ENCODE measurements at regions of chr3 and their contacts with region 1.

Region 1: GRCh38 chr3:44418549-44418948 is 58.9 kb downstream of the ZNF445 start:
- DNase-seq: no peak
- ATAC-seq: no peak
- H3K4me3 ChIP-seq: no peak overlapping the region
- H3K27ac ChIP-seq: no peak overlapping the region
- H3K4me1 ChIP-seq: no peaks in the 10 kb centered on the region
- H3K27me3 ChIP-seq: peaks cover 2% of the 10 kb centered on the region
- CTCF ChIP-seq: 0 out of 2 replicates have a peak, but pooled peaks have one; percentile 5
- POLR2A ChIP-seq: no peak
- RAD21 ChIP-seq: no peak

Region 2: DNA sequence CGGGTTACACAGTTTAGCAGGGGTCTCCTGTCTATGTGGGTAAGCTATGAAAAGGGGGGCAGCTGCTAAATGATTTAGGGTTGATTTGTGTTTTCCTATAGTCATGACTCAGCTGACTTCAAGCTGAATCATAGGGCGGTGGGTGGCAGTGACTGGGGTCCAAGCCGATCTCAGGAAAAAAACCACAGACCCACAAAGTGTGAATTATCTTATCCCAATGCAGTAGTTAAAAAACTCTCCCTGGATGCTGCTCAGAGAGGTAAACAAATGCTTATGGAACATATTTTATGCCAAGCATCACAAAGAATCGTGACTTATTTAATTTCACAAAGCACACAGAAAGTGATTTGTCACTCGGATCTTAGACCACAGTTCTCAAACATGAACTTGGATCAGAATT is 195.2 kb before region 1 on chr3:
- CTCF ChIA-PET with region 1: no interaction called
- POLR2A ChIA-PET with region 1: no interaction called
- dilution Hi-C with region 1: no loop called
- in situ Hi-C with region 1: no loop called
- intact Hi-C with region 1: no loop called
- DNase-seq: no peak
- ATAC-seq: no peak
- H3K4me3 ChIP-seq: no peak overlapping the region
- H3K27ac ChIP-seq: no peak overlapping the region
- H3K4me1 ChIP-seq: no peaks in the 10 kb centered on the region
- H3K27me3 ChIP-seq: no peaks in the 10 kb centered on the region; the same call in 1 of the 2 replicates
- CTCF ChIP-seq: no peak
- POLR2A ChIP-seq: no peak
- RAD21 ChIP-seq: no peak

Region 3: DNA sequence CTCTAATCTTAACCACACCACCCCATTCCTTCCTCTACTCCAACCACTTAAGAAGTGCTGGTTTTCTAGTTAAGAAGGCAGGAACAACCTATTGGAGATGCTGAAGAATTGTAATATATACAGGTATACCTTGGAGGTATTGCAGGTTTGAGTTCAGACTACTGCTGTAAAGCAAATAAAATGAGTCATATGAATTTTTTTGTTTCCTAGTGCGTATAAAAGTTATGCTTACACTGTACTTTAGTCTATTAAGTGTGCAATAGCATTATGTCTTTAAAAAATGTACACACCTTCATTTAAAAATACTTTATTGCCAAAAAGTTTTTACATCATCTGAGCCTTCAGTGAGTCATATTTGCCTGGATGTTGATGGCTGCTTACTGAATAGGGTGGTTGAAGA is 154.4 kb before region 1 on chr3:
- CTCF ChIA-PET with region 1: no interaction called
- POLR2A ChIA-PET with region 1: no interaction called
- dilution Hi-C with region 1: no loop called
- in situ Hi-C with region 1: no loop called
- intact Hi-C with region 1: no loop called
- DNase-seq: no peak
- ATAC-seq: no peak
- H3K4me3 ChIP-seq: no peak overlapping the region
- H3K27ac ChIP-seq: no peak overlapping the region
- H3K4me1 ChIP-seq: no peaks in the 10 kb centered on the region
- H3K27me3 ChIP-seq: no peaks in the 10 kb centered on the region
- CTCF ChIP-seq: no peak
- POLR2A ChIP-seq: no peak
- RAD21 ChIP-seq: no peak

Region 4: DNA sequence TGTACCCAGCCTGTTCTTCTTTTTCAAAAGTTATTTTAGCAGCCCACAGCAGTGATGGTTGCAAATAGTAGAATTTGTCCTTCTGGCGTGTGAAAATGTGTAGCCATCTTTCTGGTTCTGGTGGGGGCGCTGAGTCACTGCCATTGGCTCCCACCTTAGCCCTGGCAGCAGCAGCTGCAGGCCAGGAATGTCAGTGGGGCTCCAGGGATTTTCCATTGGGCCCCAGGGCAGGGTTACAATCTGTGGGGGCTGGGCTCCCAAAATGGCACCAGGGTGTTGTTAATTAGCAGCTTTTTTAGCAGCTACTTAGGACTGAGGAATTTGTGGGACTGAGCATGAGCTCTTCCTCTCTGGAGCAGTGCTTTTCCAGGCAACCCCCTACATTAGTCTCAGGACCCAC is 137.9 kb before region 1 on chr3:
- CTCF ChIA-PET with region 1: no interaction called
- POLR2A ChIA-PET with region 1: no interaction called
- dilution Hi-C with region 1: no loop called
- in situ Hi-C with region 1: no loop called
- intact Hi-C with region 1: no loop called
- DNase-seq: no peak
- ATAC-seq: no peak
- H3K4me3 ChIP-seq: no peak overlapping the region
- H3K27ac ChIP-seq: no peak overlapping the region
- H3K4me1 ChIP-seq: no peaks in the 10 kb centered on the region
- H3K27me3 ChIP-seq: no peaks in the 10 kb centered on the region
- CTCF ChIP-seq: no peak
- POLR2A ChIP-seq: no peak
- RAD21 ChIP-seq: no peak

Region 5: DNA sequence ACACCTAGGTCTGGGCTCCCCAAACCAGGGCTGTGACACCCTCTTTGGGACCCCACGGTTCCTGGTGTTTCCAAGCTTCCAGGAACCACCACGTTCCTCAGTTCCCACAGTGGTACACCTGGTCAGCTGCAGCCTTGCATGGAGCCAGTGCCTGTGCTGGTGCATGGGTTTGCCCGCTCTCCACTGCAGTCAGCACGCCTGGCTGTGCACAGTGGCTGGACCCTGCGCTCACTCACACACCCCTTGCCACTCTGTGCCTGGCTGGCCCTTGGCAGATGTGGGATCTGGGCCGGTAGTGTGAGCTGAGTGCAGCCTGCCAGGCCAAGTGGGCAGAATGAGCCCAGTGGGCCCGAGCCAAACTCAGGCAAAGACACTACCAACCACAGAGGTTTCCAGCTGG is 31.1 kb before region 1 on chr3:
- CTCF ChIA-PET with region 1: no interaction called
- POLR2A ChIA-PET with region 1: no interaction called
- dilution Hi-C with region 1: no loop called
- in situ Hi-C with region 1: no loop called
- intact Hi-C with region 1: loop called (anchors 1 kb)
- DNase-seq: no peak
- ATAC-seq: no peak
- H3K4me3 ChIP-seq: no peak overlapping the region
- H3K27ac ChIP-seq: no peak overlapping the region
- H3K4me1 ChIP-seq: no peaks in the 10 kb centered on the region
- H3K27me3 ChIP-seq: no peaks in the 10 kb centered on the region
- CTCF ChIP-seq: no peak
- POLR2A ChIP-seq: no peak
- RAD21 ChIP-seq: no peak

Measured in IMR-90 (cell line).